PC-9 (cell line): ENCODE measurements at regions of chr15 and their contacts with region 1.

Region 1: GRCh38 chr15:52749258-52749657 is 40.9 kb downstream of the ONECUT1 start:
- DNase-seq: no peak
- H3K4me3 ChIP-seq: no peak overlapping the region
- H3K27ac ChIP-seq: no peak overlapping the region
- H3K4me1 ChIP-seq: no peaks in the 10 kb centered on the region
- H3K27me3 ChIP-seq: no peaks in the 10 kb centered on the region
- CTCF ChIP-seq: no peak

Region 2: GRCh38 chr15:53189860-53190259 is 440.6 kb after region 1 on chr15:
- CTCF ChIA-PET with region 1: no interaction called
- POLR2A ChIA-PET with region 1: interaction called, 21 read pairs
- intact Hi-C with region 1: no loop called
- DNase-seq: no peak
- H3K4me3 ChIP-seq: no peak overlapping the region
- H3K27ac ChIP-seq: no peak overlapping the region
- H3K4me1 ChIP-seq: no peaks in the 10 kb centered on the region
- H3K27me3 ChIP-seq: no peaks in the 10 kb centered on the region
- CTCF ChIP-seq: no peak